Right ventricle myocardium superior (tissue), 1 donor: ENCODE measurements at regions of chr17 and their contacts with region 1.

Region 1: DNA sequence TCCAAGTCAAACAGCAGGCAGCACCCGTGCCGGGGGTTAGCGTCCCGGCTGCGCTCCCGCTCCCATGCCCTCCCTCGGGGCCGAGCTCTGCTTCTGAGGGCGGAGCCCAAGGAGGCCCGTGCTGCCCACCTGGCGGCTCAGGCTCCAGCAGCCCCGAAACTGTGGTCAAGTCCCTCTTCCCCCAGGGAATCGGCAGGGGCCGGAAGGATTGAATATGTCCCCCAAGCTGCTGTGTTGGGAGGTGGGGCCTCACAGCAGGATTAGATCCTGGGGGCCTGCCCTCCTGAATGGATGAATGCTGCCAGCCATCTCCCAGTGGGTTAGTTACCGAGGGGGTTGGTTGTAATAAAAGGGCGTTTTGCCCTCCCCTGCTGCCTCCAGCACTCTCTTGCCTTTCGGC is 33.9 kb downstream of the MAP2K3 start:
- DNase-seq: no peak
- ATAC-seq: no peak

Region 2: GRCh38 chr17:21263351-21263750 is 55.1 kb before region 1 on chr17:
- intact Hi-C with region 1: loop called (anchors 10 kb)
- DNase-seq: no peak
- ATAC-seq: no peak

Region 3: GRCh38 chr17:21457051-21458026 is 138.9 kb after region 1 on chr17:
- intact Hi-C with region 1: loop called (anchors 10 kb)
- DNase-seq: peak; percentile 94
- ATAC-seq: peak; percentile 97

Region 4: DNA sequence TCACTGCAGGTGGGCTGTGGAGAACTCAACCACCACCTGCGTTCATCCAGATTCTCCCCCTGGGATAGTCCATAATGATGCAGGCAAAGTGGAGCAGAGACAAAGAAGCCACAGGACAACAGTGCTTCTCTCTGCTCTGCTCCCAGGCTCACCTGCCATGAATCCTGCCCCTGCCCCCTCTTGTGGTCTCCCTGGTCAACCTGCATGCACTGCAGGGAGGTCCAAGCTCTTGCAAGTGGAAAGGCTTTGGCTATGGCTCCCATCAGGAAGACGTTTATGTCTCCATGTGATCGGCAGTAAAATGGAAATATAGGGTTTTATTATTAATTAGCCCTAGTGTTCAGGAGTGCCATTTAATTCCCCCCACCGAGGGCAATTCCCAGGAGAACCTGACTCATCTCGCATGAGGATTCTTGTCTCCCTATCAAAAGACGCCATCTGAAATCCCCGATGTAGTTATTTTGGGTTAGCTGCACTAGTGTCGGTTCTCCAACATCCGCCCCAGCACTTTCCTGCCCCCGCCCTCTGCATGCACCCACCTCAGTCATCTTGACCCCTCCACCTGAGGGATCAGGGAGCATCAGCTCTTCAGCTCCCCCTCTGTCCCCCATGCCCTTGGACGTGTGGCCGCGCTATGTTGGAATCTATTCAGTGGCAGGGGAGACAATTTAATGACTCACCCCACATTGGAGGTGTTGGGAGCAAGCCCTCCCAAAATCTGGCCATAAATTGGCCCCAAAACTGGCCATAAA is 149.5 kb after region 1 on chr17:
- intact Hi-C with region 1: no loop called
- DNase-seq: no peak
- ATAC-seq: no peak